Natural killer cell (primary cell): ENCODE measurements at regions of chr5 and their contacts with region 1.

Region 1: GRCh38 chr5:131634996-131635754 is at the start of gene RAPGEF6:
- DNase-seq: peak; percentile 93 to 100
- ATAC-seq: peak; percentile 83 to 94 (median 87)
- H3K4me3 ChIP-seq: peak within 1 kb of the TSS; percentile 94
- H3K4me3 Mint-ChIP-seq: peak within 1 kb of the TSS; percentile 95
- H3K27ac ChIP-seq: peak within 1 kb of the TSS; percentile 89
- H3K27ac Mint-ChIP-seq: peak within 1 kb of the TSS in 1 of 2 donors; percentile 96
- H3K4me1 ChIP-seq: peaks cover 15% of the 10 kb centered on the region
- H3K4me1 Mint-ChIP-seq: peaks cover 28% of the 10 kb centered on the region in 2 donors
- H3K27me3 ChIP-seq: no peaks in the 10 kb centered on the region
- H3K27me3 Mint-ChIP-seq: no peaks in the 10 kb centered on the region
- CTCF ChIP-seq: no peak
- total RNA-seq, gene RAPGEF6: 30.1 to 61.0 (median 42.1) TPM

Region 2: DNA sequence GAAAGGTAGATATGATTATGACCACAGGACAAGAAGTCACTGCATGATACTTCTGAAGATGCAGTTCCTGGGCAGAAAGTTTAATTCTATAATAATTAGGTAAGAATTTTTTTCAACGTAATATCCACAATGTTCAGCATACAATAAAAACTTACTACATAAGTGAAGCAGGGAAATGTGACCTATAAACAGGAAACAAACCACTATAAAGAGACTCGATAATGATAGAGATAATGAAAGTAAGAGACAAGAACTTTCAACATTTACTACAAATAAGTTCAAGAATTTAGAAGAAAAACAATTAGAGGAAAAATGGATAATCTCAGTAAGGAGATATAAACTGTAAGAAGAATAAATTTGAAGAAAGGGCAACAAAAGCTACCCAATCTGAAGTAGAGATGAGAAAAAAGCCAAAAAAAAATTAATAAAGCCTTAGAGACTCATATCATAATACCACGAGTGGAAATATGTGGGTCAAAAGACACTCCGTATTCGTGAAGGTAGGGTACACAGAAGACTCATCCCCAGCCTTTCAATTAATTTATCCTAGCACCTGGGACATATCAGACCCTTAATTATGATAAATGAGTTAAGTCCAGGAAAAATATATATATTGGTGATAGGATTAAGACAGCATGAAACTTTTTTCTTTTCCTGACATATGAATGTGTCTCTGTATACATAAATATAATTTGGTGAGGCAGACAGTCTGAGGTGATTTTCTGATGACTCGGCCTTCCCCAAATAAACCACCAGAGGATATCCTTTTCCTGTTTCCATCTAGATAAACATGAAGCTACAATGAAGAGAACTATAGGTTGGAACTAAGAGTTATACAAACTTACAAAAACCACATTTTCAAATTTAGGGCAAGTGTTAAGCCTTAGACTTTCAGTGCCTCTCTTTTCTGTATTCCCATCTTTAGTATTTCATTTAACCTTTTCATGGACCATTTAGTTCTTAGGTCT is 120.6 kb before region 1 on chr5:
- intact Hi-C with region 1: loop called (anchors 2 kb)
- DNase-seq: peak in 1 of 2 donors; percentile 79
- ATAC-seq: peak; percentile 84 to 91 (median 90)
- H3K4me3 ChIP-seq: peak overlapping the region; percentile 14
- H3K4me3 Mint-ChIP-seq: peak overlapping the region; percentile 90
- H3K27ac ChIP-seq: peak overlapping the region; percentile 88
- H3K27ac Mint-ChIP-seq: peak overlapping the region; percentile 91 to 96
- H3K4me1 ChIP-seq: peaks cover 10% of the 10 kb centered on the region
- H3K4me1 Mint-ChIP-seq: peaks cover 43 to 44% of the 10 kb centered on the region in 2 donors
- H3K27me3 ChIP-seq: no peaks in the 10 kb centered on the region
- H3K27me3 Mint-ChIP-seq: no peaks in the 10 kb centered on the region
- CTCF ChIP-seq: no peak

Region 3: DNA sequence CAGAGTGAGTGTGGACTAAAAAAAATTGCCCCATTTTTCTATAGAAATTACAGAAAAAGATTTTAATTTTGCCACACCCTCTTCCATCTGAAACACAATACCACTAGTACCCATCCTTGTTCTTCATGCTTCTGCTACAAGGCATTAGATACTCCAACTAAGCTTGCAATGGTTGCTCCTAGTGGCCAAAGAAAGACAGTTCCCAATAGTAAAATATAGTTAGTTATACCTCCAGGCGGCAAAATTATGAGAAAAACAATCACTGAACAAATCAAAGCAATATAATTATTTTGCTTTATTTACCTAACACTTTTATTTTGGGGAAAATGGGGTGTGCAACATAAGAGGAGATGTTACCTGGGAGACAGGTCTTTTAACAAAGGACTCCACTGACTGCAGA is 101.3 kb before region 1 on chr5:
- intact Hi-C with region 1: loop called (anchors 5 kb)
- DNase-seq: peak in 1 of 2 donors; percentile 51
- ATAC-seq: no peak
- H3K4me3 ChIP-seq: no peak overlapping the region
- H3K4me3 Mint-ChIP-seq: peak overlapping the region; percentile 21
- H3K27ac ChIP-seq: no peak overlapping the region
- H3K27ac Mint-ChIP-seq: peak overlapping the region; percentile 57 to 86
- H3K4me1 ChIP-seq: peaks cover 16% of the 10 kb centered on the region
- H3K4me1 Mint-ChIP-seq: peaks cover 32 to 61% of the 10 kb centered on the region in 2 donors
- H3K27me3 ChIP-seq: no peaks in the 10 kb centered on the region
- H3K27me3 Mint-ChIP-seq: no peaks in the 10 kb centered on the region
- CTCF ChIP-seq: no peak

Region 4: GRCh38 chr5:131595088-131596033 is 39.8 kb before region 1 on chr5:
- intact Hi-C with region 1: loop called (anchors 1 kb)
- DNase-seq: peak in 1 of 2 donors; percentile 67
- ATAC-seq: peak; percentile 84 to 93 (median 84)
- H3K4me3 ChIP-seq: no peak overlapping the region
- H3K4me3 Mint-ChIP-seq: peak overlapping the region; percentile 72
- H3K27ac ChIP-seq: peak overlapping the region; percentile 74
- H3K27ac Mint-ChIP-seq: peak overlapping the region; percentile 57 to 80
- H3K4me1 ChIP-seq: peaks cover 20% of the 10 kb centered on the region
- H3K4me1 Mint-ChIP-seq: peaks cover 36 to 49% of the 10 kb centered on the region in 2 donors
- H3K27me3 ChIP-seq: no peaks in the 10 kb centered on the region
- H3K27me3 Mint-ChIP-seq: no peaks in the 10 kb centered on the region
- CTCF ChIP-seq: no peak

Region 5: GRCh38 chr5:131796793-131797693 is 161.9 kb after region 1 on chr5 and contains the start of gene FNIP1:
- intact Hi-C with region 1: loop called (anchors 2 kb)
- DNase-seq: peak; percentile 97 to 99
- ATAC-seq: peak; percentile 91 to 99 (median 95)
- H3K4me3 ChIP-seq: peak within 1 kb of the TSS; percentile 72
- H3K4me3 Mint-ChIP-seq: peak within 1 kb of the TSS; percentile 93
- H3K27ac ChIP-seq: peak within 1 kb of the TSS; percentile 91
- H3K27ac Mint-ChIP-seq: peak within 1 kb of the TSS; percentile 86 to 94
- H3K4me1 ChIP-seq: peaks cover 6% of the 10 kb centered on the region
- H3K4me1 Mint-ChIP-seq: peaks cover 24 to 29% of the 10 kb centered on the region in 2 donors
- H3K27me3 ChIP-seq: no peaks in the 10 kb centered on the region
- H3K27me3 Mint-ChIP-seq: no peaks in the 10 kb centered on the region
- CTCF ChIP-seq: no peak
- total RNA-seq, gene FNIP1: 49.6 to 54.6 (median 50.8) TPM

Region 6: GRCh38 chr5:132007399-132008165 is 372.4 kb after region 1 on chr5:
- intact Hi-C with region 1: loop called (anchors 5 kb)
- DNase-seq: peak; percentile 54 to 88
- ATAC-seq: peak; percentile 49 to 58 (median 54)
- H3K4me3 ChIP-seq: no peak overlapping the region
- H3K4me3 Mint-ChIP-seq: no peak overlapping the region
- H3K27ac ChIP-seq: no peak overlapping the region
- H3K27ac Mint-ChIP-seq: no peak overlapping the region
- H3K4me1 ChIP-seq: peaks cover 30% of the 10 kb centered on the region
- H3K4me1 Mint-ChIP-seq: peaks cover 19 to 37% of the 10 kb centered on the region in 2 donors
- H3K27me3 ChIP-seq: peaks cover 26% of the 10 kb centered on the region
- H3K27me3 Mint-ChIP-seq: peaks cover 26 to 29% of the 10 kb centered on the region in 2 donors
- CTCF ChIP-seq: peak; percentile 77